ENCODE measurements at regions of chr3 and their contacts with region 1.

Region 1: GRCh38 chr3:132399054-132399929 is 18.0 kb upstream of the DNAJC13 start:
- DNase-seq: no peak
- H3K4me3 ChIP-seq: no peak overlapping the region
- H3K27me3 ChIP-seq: no peaks in the 10 kb centered on the region; the same call in 1 of the 2 replicates
- CTCF ChIP-seq: peak; percentile 83

Region 2: DNA sequence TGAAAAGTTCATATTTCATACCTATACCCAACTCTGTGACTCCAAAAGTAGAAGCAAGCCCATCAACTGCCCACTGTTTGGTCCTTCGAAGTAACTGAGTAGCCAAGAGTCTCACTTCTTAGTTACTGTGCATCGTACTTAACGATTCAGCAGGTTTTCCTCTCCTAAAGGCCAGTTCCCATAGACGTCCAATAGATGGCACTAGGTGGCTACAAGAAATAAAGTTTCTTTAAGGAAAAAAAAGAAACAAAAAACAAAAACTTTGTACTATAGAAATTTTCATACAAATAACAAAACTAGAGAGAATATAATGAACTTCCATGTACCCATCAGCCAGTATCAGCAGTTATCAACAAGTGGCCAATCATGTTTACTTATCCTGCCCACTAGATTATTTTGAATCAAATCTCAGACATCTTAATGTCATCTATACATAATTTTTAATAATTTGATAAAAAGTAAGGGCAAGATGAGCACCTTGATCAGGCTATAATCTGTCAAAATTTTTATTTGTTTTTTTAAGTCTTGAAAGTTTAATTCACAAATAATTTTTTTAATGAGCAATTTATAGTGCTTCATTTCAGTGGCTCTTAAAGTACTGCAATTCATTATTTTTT is 145.9 kb before region 1 on chr3:
- CTCF ChIA-PET with region 1: interaction called, 11 read pairs
- POLR2A ChIA-PET with region 1: no interaction called
- DNase-seq: no peak
- H3K4me3 ChIP-seq: no peak overlapping the region
- H3K27me3 ChIP-seq: no peaks in the 10 kb centered on the region
- CTCF ChIP-seq: peak; percentile 87

Region 3: GRCh38 chr3:132352541-132353143 is 46.6 kb before region 1 on chr3:
- CTCF ChIA-PET with region 1: interaction called, 178 read pairs
- POLR2A ChIA-PET with region 1: no interaction called
- DNase-seq: peak; percentile 12
- H3K4me3 ChIP-seq: no peak overlapping the region
- H3K27me3 ChIP-seq: no peaks in the 10 kb centered on the region
- CTCF ChIP-seq: peak; percentile 88

Region 4: DNA sequence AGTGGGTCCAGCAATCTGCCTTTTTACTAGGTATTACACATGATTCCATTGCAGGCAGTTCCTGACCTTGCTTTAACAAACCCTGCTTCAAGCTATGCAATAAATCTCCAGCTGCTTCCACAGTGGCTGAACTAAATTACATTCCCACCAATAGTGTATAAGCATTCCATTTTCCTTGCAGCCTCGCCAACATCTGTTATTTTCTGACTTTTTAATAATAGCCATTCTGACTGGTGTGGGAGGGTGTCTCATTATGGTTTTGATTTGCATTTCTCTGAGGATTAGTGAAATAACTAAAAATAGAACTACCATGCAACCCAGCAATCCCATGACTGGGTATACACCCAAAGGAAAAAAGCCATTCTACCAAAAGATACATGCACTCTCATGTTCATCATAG is 18.4 kb before region 1 on chr3:
- CTCF ChIA-PET with region 1: interaction called, 17 read pairs
- POLR2A ChIA-PET with region 1: no interaction called
- DNase-seq: no peak
- H3K4me3 ChIP-seq: no peak overlapping the region
- H3K27me3 ChIP-seq: no peaks in the 10 kb centered on the region; the same call in 1 of the 2 replicates
- CTCF ChIP-seq: no peak

Region 5: DNA sequence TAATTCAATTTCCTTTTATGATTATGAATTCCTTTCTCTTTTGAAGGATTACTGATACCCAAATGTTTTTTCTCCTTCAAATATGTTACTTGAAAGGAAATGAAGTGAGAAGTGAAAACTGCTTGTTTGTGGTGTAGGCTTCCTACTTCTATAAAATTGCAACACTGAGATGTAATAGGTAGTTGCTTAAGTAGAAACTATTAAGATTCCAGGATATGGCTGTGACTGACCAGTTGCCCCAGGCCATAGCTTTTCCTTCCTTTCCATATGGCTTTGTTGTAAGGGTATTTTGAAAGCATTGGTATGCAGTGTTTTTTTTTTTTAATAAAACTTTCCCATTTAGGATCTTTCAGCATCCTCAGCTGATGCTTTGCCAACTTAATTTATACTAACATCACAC is 46.5 kb after region 1 on chr3:
- CTCF ChIA-PET with region 1: no interaction called
- POLR2A ChIA-PET with region 1: no interaction called
- DNase-seq: peak; percentile 69
- H3K4me3 ChIP-seq: no peak overlapping the region
- H3K27me3 ChIP-seq: no peaks in the 10 kb centered on the region
- CTCF ChIP-seq: no peak

Region 6: DNA sequence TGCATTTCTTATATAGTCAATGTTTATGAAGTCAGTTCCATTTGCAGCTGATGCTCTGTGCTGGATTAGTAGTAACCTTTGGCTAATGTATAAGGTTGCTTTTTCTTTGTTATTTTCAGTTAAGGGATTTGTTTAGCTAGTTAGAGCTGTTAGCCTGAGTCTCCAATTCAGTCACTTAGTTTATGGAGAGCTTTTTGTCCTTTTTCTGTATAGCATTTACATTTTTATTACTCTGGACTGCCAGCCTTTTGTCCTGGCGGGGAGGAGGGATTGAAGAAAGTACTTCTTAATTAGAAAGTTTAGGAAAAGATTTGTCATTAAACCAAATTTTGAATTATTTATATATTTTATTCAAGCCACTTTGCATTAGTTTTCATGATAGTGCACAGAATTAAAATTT is 70.0 kb after region 1 on chr3:
- CTCF ChIA-PET with region 1: no interaction called
- POLR2A ChIA-PET with region 1: no interaction called
- DNase-seq: no peak
- H3K4me3 ChIP-seq: no peak overlapping the region
- H3K27me3 ChIP-seq: no peaks in the 10 kb centered on the region
- CTCF ChIP-seq: no peak

Measured in BJ (cell line).